Activated T-helper 1 cell treated with anti-CD3 and anti-CD28 coated beads, Interleukin-12 subunit alpha, Interleukin-12 subunit beta, Interleukin-2, Interleukin-4 antibody, amounts not matched to agents 30 ng/mL and 10 ng/mL and 1 ng/mL, durations not matched to agents 14 hours and 24 hours and 36 hours (primary cell): ENCODE measurements at regions of chrX and their contacts with region 1.

Region 1: GRCh38 chrX:57821703-57822375 is 88.4 kb downstream of the ZXDA start:
- DNase-seq: no peak
- H3K4me3 Mint-ChIP-seq: no peak overlapping the region
- H3K27ac Mint-ChIP-seq: no peak overlapping the region
- H3K4me1 Mint-ChIP-seq: no peaks in the 10 kb centered on the region
- H3K27me3 Mint-ChIP-seq: no peaks in the 10 kb centered on the region

Region 2: DNA sequence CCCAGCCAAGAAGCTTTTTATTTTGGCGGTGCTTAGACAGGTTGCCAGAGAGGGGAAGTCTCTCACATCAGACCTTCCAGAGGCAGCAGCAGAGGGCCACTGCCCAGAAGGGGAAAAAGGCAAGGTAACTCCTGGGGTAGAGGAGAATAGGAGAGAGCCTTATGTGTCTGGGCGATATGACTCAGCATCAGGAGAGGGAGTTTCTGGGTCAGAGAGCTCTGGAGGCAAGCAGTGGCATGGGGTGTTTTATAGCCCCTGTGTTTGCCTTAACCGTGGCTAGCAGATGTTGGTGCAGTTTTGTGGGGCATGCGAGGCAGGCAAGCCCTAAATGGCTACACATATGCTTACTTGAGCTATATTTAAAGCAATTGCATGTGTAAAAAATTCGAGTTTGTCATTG is 238.4 kb before region 1 on chrX:
- intact Hi-C with region 1: loop called (anchors 5 kb)
- DNase-seq: no peak
- H3K4me3 Mint-ChIP-seq: no peak overlapping the region
- H3K27ac Mint-ChIP-seq: no peak overlapping the region
- H3K4me1 Mint-ChIP-seq: no peaks in the 10 kb centered on the region
- H3K27me3 Mint-ChIP-seq: no peaks in the 10 kb centered on the region

Region 3: DNA sequence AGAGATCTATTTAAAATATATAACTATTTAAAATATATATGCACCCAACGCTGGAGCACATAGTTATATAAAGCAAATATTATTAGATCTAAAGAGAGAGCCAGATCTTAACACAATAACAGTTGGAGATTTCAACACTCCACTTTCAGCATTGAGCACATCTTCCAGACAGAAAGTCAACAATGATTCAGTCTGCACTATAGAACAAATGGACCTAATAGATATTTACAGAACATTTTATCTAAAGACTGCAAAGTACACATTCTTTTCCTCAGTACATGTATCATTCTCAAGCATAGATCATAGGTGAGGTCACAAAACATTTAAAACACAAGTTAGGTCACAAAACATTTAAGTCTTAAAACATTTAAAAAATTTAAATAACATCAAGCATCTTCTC is 178.1 kb before region 1 on chrX:
- intact Hi-C with region 1: no loop called
- DNase-seq: no peak
- H3K4me3 Mint-ChIP-seq: no peak overlapping the region
- H3K27ac Mint-ChIP-seq: no peak overlapping the region
- H3K4me1 Mint-ChIP-seq: no peaks in the 10 kb centered on the region
- H3K27me3 Mint-ChIP-seq: no peaks in the 10 kb centered on the region

Region 4: GRCh38 chrX:57918750-57919436 is 97.1 kb after region 1 on chrX:
- intact Hi-C with region 1: loop called (anchors 1 kb)
- DNase-seq: no peak
- H3K4me3 Mint-ChIP-seq: no peak overlapping the region
- H3K27ac Mint-ChIP-seq: no peak overlapping the region
- H3K4me1 Mint-ChIP-seq: no peaks in the 10 kb centered on the region
- H3K27me3 Mint-ChIP-seq: no peaks in the 10 kb centered on the region

Region 5: DNA sequence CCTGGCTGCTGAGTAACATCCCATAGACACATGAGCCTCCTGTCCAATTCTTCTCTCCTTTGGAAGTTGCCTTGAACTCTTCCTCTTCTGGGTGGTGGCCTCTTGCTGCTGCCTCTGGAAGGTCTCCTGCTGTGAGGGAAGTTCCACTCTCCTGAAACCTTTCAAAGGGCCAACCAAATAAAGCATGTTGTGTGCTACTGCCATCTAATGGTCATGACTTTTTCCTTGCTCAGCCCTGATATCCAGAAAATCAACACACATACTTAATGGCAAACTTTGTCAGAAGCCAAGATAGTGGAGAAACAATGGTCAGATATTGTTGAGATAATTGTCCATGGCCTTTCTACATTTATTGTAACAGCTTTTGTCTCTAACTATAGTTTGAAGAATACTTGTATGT is 107.5 kb after region 1 on chrX:
- intact Hi-C with region 1: no loop called
- DNase-seq: no peak
- H3K4me3 Mint-ChIP-seq: no peak overlapping the region
- H3K27ac Mint-ChIP-seq: no peak overlapping the region
- H3K4me1 Mint-ChIP-seq: no peaks in the 10 kb centered on the region
- H3K27me3 Mint-ChIP-seq: no peaks in the 10 kb centered on the region

Region 6: DNA sequence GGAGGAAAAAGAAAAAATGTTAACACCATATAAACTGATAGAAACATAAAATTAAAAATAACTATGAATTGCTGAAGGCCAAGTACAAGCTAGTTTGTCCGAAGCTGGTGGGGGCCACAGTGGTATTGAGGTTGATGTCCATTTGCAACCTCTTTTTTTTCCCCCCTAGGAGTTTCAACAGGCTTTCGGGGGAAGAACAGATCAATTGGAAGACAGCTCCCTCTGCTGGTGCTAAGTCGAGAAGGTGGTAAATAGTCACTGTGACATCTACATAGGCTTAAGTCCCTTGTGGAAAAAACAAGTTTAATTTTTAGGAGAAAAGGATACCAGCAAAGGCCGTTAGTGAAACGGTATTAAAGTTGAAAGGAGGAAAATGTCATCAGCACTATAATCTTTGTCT is 204.1 kb after region 1 on chrX:
- intact Hi-C with region 1: loop called (anchors 1 kb)
- DNase-seq: no peak
- H3K4me3 Mint-ChIP-seq: no peak overlapping the region
- H3K27ac Mint-ChIP-seq: no peak overlapping the region
- H3K4me1 Mint-ChIP-seq: no peaks in the 10 kb centered on the region
- H3K27me3 Mint-ChIP-seq: no peaks in the 10 kb centered on the region